ENCODE measurements at regions of chr3 and their contacts with region 1.

Region 1: GRCh38 chr3:46705022-46705530 is 3.9 kb downstream of the TMIE start:
- DNase-seq: peak in 1 of 2 donors; percentile 87
- H3K4me3 ChIP-seq: no peak overlapping the region
- H3K27ac ChIP-seq: no peak overlapping the region
- H3K4me1 ChIP-seq: peaks cover 6 to 13% of the 10 kb centered on the region in 2 donors
- H3K27me3 ChIP-seq: no peaks in the 10 kb centered on the region
- CTCF ChIP-seq: peak; percentile 91 to 98 (median 93)

Region 2: DNA sequence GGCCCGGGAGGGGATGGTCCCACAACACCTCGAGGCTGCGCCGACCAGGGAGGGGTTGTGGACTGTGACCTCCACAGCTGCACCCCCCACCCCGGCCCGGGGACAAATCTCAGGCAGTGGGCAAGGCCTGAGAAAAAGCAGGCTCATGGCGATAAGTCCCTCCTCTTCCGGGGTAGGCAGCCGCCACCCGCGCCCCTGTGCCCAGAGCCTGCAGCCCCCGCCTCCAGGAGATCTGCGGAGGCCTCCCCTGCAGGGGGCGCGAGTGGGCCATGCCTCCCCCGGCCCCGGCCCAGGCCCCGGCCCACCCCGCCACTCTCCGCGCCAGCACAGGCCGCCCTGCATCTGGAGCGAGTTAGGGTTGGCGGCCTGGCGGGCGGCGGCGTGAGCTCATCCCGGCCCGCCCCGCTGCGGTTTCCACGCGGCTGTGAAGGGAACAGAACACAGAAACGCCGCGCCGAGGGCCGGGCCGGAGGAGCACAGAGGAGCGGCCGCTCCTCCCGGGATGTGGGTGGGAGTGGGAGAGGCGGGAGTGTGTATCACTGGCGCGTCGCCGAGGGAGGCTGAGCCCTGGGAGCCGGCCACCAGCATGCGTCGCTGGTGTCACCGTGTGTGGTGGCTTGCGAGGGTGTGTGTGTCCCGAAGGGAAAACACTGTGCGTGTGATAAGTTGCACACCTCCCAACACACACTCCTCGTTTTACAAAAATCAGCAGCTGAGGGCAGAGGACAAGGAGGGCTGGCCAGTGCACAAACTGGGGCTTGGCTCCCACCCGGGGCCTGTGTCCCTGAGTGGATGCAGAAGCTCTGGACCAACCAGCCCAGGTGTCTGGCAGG is 140.9 kb after region 1 on chr3:
- intact Hi-C with region 1: loop called (anchors 5 kb)
- DNase-seq: peak; percentile 21 to 84
- H3K4me3 ChIP-seq: peak overlapping the region; percentile 48 to 70
- H3K27ac ChIP-seq: peak overlapping the region; percentile 59 to 72
- H3K4me1 ChIP-seq: peaks cover 11 to 12% of the 10 kb centered on the region in 2 donors
- H3K27me3 ChIP-seq: no peaks in the 10 kb centered on the region
- CTCF ChIP-seq: peak; percentile 38 to 69 (median 46)

Region 3: GRCh38 chr3:46866720-46867549 is 161.9 kb after region 1 on chr3:
- intact Hi-C with region 1: loop called (anchors 1 kb)
- DNase-seq: peak in 1 of 2 donors; percentile 88
- H3K4me3 ChIP-seq: peak overlapping the region in 1 of 2 donors; percentile 29
- H3K27ac ChIP-seq: peak overlapping the region; percentile 39 to 74
- H3K4me1 ChIP-seq: peaks cover 15 to 25% of the 10 kb centered on the region in 2 donors
- H3K27me3 ChIP-seq: no peaks in the 10 kb centered on the region
- CTCF ChIP-seq: peak; percentile 82 to 93 (median 91)

Region 4: GRCh38 chr3:46895204-46895660 is 190.2 kb after region 1 on chr3:
- intact Hi-C with region 1: loop called (anchors 1 kb)
- DNase-seq: no peak
- H3K4me3 ChIP-seq: no peak overlapping the region
- H3K27ac ChIP-seq: no peak overlapping the region
- H3K4me1 ChIP-seq: peaks cover 0 to 39% of the 10 kb centered on the region in 2 donors
- H3K27me3 ChIP-seq: no peaks in the 10 kb centered on the region
- CTCF ChIP-seq: peak; percentile 77 to 90 (median 82)

Region 5: GRCh38 chr3:46909535-46910442 is 204.7 kb after region 1 on chr3:
- intact Hi-C with region 1: loop called (anchors 1 kb)
- DNase-seq: peak; percentile 56 to 92
- H3K4me3 ChIP-seq: peak overlapping the region in 1 of 2 donors; percentile 19
- H3K27ac ChIP-seq: no peak overlapping the region
- H3K4me1 ChIP-seq: peaks cover 14 to 21% of the 10 kb centered on the region in 2 donors
- H3K27me3 ChIP-seq: no peaks in the 10 kb centered on the region
- CTCF ChIP-seq: peak; percentile 83 to 93 (median 88)

Region 6: DNA sequence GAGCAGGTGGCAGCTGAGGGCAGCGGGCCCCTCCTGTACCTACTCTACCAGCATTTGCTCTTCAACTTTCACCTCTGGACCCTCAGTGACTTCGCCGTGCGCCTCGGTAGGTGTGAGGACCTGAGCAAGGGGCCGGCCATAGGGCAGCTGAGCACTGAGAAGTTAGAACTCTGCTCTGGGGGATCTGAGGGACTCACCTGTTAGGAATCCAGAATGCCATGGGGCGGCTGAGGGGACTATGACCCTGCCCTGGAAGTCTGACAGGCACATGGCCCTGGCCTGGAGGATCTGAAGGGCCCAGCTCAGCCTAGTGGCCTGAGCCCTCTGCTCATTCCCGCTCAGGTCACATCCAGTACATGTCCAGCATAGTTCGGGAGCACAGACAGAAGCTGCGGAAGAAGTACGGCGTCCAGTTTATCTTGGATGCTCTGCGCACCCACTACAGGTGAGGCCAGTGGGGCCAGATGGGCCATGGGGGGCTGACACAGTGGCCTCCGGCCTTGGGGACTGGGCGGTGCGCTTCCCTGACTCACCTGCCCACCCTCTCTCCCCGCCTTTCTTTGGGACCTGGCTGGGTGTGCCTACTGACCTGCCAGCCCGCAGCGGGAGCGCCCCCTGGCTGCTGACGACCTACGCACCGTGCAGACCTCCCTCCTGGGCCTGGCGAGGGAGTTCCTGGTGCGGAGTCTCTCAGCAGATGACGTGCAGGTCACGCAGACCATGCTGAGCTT is 293.2 kb after region 1 on chr3:
- intact Hi-C with region 1: loop called (anchors 5 kb)
- DNase-seq: peak in 1 of 2 donors; percentile 9
- H3K4me3 ChIP-seq: no peak overlapping the region
- H3K27ac ChIP-seq: no peak overlapping the region
- H3K4me1 ChIP-seq: no peaks in the 10 kb centered on the region
- H3K27me3 ChIP-seq: no peaks in the 10 kb centered on the region
- CTCF ChIP-seq: peak; percentile 69 to 83 (median 78)

Region 7: DNA sequence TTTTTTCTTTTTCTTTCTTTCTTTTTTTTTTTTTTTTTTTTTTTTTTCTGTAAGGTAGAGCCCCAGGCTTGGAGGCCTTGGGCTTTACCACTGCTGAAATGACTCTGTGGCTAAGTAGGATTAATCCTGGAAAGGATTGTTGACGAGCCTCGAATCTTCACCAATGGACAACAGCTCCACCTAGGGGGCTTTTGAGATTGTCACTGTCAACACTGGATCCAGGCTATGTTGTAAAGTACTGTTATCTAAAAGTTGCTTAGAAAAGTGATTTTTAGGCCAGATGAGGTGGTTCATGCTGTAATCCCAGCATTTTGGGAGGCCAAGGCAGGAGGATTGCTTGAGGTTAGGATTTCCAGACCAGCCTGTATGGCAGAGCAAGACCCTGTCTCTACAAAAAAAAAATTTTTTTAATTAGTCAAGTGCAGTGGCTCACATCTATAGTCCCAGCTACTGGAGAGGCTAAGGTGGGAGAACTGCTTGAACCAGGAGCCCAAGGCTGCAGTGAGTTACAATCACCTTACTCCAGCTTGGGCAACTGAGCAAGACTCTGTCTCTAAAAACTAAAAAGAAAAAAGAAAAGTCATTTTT is 619.3 kb after region 1 on chr3:
- intact Hi-C with region 1: loop called (anchors 5 kb)
- DNase-seq: no peak
- H3K4me3 ChIP-seq: no peak overlapping the region
- H3K27ac ChIP-seq: no peak overlapping the region
- H3K4me1 ChIP-seq: no peaks in the 10 kb centered on the region
- H3K27me3 ChIP-seq: no peaks in the 10 kb centered on the region
- CTCF ChIP-seq: peak; percentile 47 to 77 (median 61)

Region 8: DNA sequence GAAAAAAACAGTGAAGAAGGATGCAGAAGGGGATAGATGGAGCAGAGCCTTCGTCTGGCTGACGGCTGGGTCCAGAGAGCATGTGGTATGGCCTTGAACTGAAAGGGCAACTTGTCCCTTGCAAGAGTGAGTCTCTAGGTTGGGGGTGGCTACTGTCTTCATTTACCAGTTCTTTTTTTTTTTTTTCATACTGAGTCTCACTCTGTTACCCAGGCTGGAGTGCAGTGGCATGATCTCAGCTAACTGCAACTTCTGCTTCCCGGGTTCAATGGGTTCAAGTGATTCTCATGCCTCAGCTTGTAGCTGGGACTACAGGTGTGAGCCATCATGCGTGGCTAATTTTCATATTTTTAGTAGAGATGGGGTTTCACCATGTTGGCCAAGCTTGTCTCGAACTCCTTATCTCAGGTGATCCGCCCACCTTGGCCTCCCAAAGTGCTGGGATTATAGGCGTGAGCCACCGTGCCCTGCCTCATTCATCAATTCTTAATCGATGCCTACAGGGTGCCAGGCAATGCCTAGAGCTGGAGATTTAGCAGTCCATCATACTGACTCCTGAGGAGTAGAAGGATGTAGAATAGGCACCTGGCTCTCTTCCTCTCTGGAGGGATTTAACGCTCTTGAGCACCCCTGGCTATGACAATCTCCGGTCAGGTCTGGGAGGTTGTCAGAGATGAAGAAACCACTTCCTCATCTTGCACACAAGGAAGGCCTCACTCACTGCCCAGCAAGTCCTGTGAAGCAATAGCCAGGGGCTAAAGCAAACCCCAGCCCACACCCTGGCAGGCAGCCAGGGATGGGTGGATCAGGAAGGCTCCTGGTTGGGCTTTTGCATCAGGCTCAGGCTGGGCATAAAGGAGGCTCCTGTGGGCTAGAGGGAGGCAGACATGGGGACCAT is 1517.8 kb after region 1 on chr3 and contains the start of gene CAMP:
- intact Hi-C with region 1: no loop called
- DNase-seq: peak; percentile 42 to 79
- H3K4me3 ChIP-seq: no peak within 1 kb of the TSS
- H3K27ac ChIP-seq: no peak within 1 kb of the TSS
- H3K4me1 ChIP-seq: no peaks in the 10 kb centered on the region
- H3K27me3 ChIP-seq: no peaks in the 10 kb centered on the region
- CTCF ChIP-seq: no peak
- total RNA-seq, gene CAMP: not detected